Colonic mucosa (tissue), 4 donors: ENCODE measurements at regions of chr20 and their contacts with region 1.

Region 1: DNA sequence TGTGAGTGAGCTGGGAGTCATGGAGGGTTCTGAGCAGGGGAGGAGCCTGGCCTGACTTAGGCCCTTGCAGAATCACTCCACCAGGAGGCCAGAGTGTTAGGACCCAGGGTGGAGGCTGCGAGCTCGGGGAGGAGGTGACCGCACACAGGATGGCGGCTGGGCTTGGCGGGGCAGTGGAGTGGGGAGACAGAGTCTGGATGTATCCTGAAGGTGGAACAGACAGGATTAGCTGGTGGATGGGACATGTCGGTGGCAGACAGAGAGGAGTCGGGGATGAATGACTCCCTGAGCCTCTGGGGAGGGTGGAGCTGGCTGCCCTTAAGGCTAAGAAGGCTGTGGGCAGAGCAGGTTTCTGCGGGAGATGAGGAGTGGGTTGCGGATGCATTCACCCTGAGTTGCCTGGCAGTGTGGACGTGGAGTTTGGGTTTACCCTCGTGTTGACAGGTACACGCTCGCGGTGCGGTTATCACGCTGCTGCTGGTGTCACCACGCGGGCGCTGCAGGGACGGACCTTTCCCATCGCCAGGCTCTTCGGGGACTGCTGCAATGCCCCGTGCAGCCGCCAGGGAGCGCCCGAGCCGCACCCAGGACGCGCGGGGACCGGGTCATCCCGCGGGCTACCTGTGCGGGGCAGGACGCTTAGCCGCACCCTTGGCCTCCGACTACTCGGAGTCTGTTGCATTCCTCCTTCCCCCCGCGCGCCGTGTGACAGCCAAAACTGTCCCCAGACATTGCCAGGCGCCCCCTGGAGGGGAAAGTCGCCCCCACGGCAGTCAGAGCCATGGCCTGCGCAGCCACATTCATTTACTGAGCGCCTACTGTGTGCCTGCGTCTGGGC is 43.0 kb upstream of the PTGIS start:
- DNase-seq: peak; percentile 85
- H3K4me3 ChIP-seq: no peak overlapping the region
- H3K27ac ChIP-seq: peak overlapping the region; percentile 17
- H3K4me1 ChIP-seq: peaks cover 7% of the 10 kb centered on the region
- H3K27me3 ChIP-seq: no peaks in the 10 kb centered on the region
- CTCF ChIP-seq: peak; percentile 100

Region 2: DNA sequence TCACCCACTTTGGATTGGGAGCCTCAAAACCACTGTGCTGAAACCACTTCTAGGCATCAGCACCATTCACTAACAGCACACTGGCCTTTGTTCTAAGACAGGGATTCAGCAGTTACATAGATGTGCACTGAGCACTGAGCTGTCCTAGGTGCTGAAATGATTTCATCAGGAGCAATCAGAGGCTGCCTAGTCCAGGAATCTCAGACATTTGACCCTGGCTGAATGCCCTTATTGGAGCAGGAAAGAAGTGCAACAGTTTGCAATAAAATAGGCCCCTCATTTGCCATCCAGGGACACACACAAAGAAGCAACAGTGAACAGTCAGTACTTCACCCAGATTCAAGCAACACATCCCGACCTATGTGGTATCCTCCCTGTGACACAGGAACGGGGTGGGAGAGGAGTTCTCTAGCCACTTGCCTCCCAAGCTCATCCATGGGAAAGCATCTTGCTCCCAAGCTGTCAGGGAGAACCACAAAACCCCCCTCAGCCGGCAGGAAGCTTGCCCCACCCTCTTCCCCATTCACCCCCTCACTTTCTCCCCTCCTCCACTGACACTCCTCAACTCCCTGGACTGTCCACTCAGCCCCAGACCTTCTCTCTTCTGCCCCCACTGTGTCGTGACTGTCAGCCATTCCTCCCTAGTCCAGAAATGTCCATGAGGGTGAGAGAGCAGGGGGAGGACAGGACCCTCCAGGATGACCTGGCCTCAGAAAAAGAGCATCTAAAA is 1087.5 kb before region 1 on chr20:
- intact Hi-C with region 1: no loop called
- DNase-seq: no peak
- H3K4me3 ChIP-seq: no peak overlapping the region
- H3K27ac ChIP-seq: no peak overlapping the region
- H3K4me1 ChIP-seq: no peaks in the 10 kb centered on the region
- H3K27me3 ChIP-seq: no peaks in the 10 kb centered on the region
- CTCF ChIP-seq: no peak

Region 3: GRCh38 chr20:49541733-49542513 is 69.0 kb before region 1 on chr20:
- intact Hi-C with region 1: loop called (anchors 2 kb)
- DNase-seq: peak; percentile 80
- H3K4me3 ChIP-seq: no peak overlapping the region
- H3K27ac ChIP-seq: no peak overlapping the region
- H3K4me1 ChIP-seq: no peaks in the 10 kb centered on the region
- H3K27me3 ChIP-seq: no peaks in the 10 kb centered on the region
- CTCF ChIP-seq: peak; percentile 78

Region 4: DNA sequence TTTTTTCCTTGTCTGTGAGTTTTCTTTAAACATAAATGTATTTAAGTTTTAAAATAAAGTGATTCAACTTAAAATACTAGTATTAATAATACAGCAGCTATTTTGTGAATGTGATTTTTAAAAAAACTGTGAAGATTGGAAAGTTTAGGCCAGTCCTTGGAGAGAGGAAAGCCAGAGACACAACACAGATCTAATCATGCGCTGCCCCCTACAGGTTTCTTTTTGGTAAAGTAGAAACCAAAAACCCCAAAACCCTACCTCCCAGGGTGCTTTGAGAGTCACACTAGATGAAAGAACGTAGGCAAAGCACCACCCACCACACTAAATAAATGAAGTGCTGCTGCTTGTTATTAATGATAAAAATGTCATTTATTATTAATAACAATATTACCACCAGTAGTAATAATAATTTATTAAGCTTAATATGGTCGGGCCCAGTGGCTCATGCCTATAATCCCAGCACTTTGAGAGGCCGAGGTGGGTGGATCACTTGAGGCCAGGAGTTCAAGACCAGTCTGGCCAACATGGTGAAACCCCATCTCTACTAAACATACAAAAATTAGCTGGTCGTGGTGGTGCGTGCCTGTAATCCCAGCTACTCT is 235.4 kb after region 1 on chr20:
- intact Hi-C with region 1: loop called (anchors 2 kb)
- DNase-seq: peak; percentile 73
- H3K4me3 ChIP-seq: no peak overlapping the region
- H3K27ac ChIP-seq: no peak overlapping the region
- H3K4me1 ChIP-seq: no peaks in the 10 kb centered on the region
- H3K27me3 ChIP-seq: no peaks in the 10 kb centered on the region
- CTCF ChIP-seq: peak; percentile 49

Region 5: GRCh38 chr20:49928401-49929141 is 317.7 kb after region 1 on chr20:
- intact Hi-C with region 1: loop called (anchors 10 kb)
- DNase-seq: peak; percentile 87
- H3K4me3 ChIP-seq: no peak overlapping the region
- H3K27ac ChIP-seq: no peak overlapping the region
- H3K4me1 ChIP-seq: no peaks in the 10 kb centered on the region
- H3K27me3 ChIP-seq: no peaks in the 10 kb centered on the region
- CTCF ChIP-seq: peak; percentile 90